ENCODE measurements at regions of chr1 and their contacts with region 1.

Region 1: DNA sequence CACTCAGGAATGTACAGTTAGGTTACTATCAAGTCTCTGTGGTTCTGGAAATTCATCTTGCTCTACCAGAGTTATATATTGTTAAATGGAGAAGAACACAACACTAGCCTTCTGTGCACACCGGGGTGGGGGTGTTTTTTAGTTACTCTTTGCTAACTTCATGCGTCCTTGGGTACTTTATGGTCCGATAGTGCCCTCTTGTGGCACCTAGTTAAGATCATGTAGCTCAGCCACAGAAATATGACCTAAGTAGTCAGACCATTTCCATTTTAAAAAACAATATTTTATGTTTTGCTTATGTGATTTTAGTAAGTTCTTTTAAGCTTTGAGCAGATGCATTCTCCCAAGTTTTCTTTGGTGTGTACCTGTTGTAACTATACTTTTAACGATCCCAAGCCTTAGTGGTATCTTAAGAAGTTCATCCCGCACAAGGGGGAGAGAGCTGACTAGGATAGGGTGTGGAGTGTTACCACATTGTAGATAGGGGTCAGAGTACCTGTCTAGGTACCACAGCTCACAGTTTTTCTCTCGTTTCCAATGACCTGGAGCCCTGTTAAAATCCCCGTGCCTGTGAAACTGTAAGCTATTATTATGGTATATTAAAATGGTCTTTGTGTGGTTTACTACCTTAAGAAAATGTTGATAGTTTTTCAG is 20.6 kb upstream of the SH3D21 start:
- DNase-seq: peak; percentile 75 to 90 (median 79)
- ATAC-seq: peak; percentile 91
- H3K4me3 ChIP-seq: no peak overlapping the region
- H3K27ac ChIP-seq: peak overlapping the region in 1 of 4 donors; percentile 24
- H3K4me1 ChIP-seq: peaks cover 4% of the 10 kb centered on the region
- H3K27me3 ChIP-seq: no peaks in the 10 kb centered on the region
- CTCF ChIP-seq: peak; percentile 44 to 85 (median 76)
- POLR2A ChIP-seq: no peak

Region 2: GRCh38 chr1:36199934-36200741 is 85.4 kb before region 1 on chr1:
- intact Hi-C with region 1: loop called (anchors 10 kb)
- DNase-seq: peak; percentile 47 to 80 (median 70)
- ATAC-seq: peak; percentile 80
- H3K4me3 ChIP-seq: no peak overlapping the region
- H3K27ac ChIP-seq: peak overlapping the region; percentile 57 to 78 (median 74)
- H3K4me1 ChIP-seq: peaks cover 60% of the 10 kb centered on the region
- H3K27me3 ChIP-seq: no peaks in the 10 kb centered on the region
- CTCF ChIP-seq: no peak
- POLR2A ChIP-seq: peak in 2 of 3 donors; percentile 27

Region 3: GRCh38 chr1:36576118-36576517 is 290.5 kb after region 1 on chr1:
- intact Hi-C with region 1: no loop called
- DNase-seq: peak; percentile 37 to 60 (median 50)
- ATAC-seq: peak; percentile 27
- H3K4me3 ChIP-seq: no peak overlapping the region
- H3K27ac ChIP-seq: no peak overlapping the region
- H3K4me1 ChIP-seq: no peaks in the 10 kb centered on the region
- H3K27me3 ChIP-seq: no peaks in the 10 kb centered on the region
- CTCF ChIP-seq: peak; percentile 58 to 78 (median 62)
- POLR2A ChIP-seq: no peak

Measured in body of pancreas (tissue), 4 donors.